PC-3 (cell line): ENCODE measurements at regions of chr13 and their contacts with region 1.

Region 1: GRCh38 chr13:102968572-102969228 is 97.5 kb downstream of the SLC10A2 start:
- DNase-seq: no peak
- ATAC-seq: no peak
- H3K4me3 ChIP-seq: no peak overlapping the region
- H3K27ac ChIP-seq: no peak overlapping the region
- H3K4me1 ChIP-seq: no peaks in the 10 kb centered on the region
- H3K27me3 ChIP-seq: peaks cover 64% of the 10 kb centered on the region
- CTCF ChIP-seq: no peak

Region 2: DNA sequence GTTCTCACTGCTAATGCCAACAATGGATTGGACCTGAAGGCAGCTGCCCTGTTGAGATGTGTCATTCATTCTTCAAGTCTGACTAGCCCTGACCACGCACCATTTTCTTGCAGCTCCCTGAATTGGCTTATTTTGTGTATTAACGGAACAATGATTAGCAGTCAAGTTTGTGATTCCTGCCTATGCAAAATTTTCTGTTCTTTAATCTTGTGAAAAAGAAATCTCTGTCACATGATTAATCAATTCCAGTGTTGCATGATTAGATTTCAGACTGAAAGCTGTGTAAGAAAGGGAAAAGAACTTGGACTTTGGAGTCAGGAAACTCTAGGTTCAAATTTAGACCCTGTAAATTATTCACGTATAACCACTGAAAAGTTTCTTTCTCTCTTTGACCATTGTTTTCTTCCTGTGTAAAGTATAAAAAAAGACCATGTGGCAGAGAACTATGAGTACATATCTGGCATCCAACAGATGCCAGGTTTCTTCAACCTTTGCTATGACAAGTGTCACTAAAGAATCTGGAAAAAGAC is 162.0 kb after region 1 on chr13:
- CTCF ChIA-PET with region 1: no interaction called
- POLR2A ChIA-PET with region 1: no interaction called
- intact Hi-C with region 1: loop called (anchors 5 kb)
- DNase-seq: no peak
- ATAC-seq: no peak
- H3K4me3 ChIP-seq: no peak overlapping the region
- H3K27ac ChIP-seq: no peak overlapping the region
- H3K4me1 ChIP-seq: no peaks in the 10 kb centered on the region
- H3K27me3 ChIP-seq: peaks cover 53% of the 10 kb centered on the region
- CTCF ChIP-seq: no peak

Region 3: GRCh38 chr13:103263448-103263847 is 294.7 kb after region 1 on chr13:
- CTCF ChIA-PET with region 1: no interaction called
- POLR2A ChIA-PET with region 1: no interaction called
- intact Hi-C with region 1: no loop called
- DNase-seq: no peak
- ATAC-seq: no peak
- H3K4me3 ChIP-seq: no peak overlapping the region
- H3K27ac ChIP-seq: no peak overlapping the region
- H3K4me1 ChIP-seq: no peaks in the 10 kb centered on the region
- H3K27me3 ChIP-seq: no peaks in the 10 kb centered on the region
- CTCF ChIP-seq: no peak